HAP-1 (cell line): ENCODE measurements at regions of chr15 and their contacts with region 1.

Region 1: DNA sequence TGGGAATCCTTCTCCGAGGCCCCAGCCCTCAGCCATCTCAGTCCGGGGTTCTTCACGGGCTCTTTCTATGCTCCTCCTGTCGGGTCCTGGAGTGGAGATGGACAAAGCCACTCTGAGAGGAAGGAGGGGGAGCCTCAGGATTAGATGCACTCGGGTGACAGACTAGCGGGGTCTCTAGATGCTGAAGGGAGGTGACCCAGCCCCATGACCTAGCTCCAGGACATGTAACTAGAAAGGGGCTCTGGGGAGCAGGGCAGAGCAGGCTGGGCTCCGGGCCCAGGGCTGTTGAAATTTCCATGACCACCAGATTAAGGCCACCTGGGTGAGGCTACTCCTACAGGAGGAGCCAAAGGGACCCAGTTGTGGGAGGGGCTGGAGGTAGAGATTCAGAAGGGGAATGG is 14.8 kb upstream of the SKIC8 start:
- DNase-seq: no peak
- H3K4me3 ChIP-seq: no peak overlapping the region
- H3K4me1 ChIP-seq: no peaks in the 10 kb centered on the region
- H3K27me3 ChIP-seq: no peaks in the 10 kb centered on the region

Region 2: GRCh38 chr15:78415286-78415685 is 101.1 kb after region 1 on chr15:
- in situ Hi-C with region 1: loop called (anchors 5 kb)
- DNase-seq: peak in 1 of 2 experiments; percentile 38
- H3K4me3 ChIP-seq: no peak overlapping the region
- H3K4me1 ChIP-seq: peaks cover 7% of the 10 kb centered on the region; the same call in 1 of the 2 replicates
- H3K27me3 ChIP-seq: peaks cover 45% of the 10 kb centered on the region

Region 3: DNA sequence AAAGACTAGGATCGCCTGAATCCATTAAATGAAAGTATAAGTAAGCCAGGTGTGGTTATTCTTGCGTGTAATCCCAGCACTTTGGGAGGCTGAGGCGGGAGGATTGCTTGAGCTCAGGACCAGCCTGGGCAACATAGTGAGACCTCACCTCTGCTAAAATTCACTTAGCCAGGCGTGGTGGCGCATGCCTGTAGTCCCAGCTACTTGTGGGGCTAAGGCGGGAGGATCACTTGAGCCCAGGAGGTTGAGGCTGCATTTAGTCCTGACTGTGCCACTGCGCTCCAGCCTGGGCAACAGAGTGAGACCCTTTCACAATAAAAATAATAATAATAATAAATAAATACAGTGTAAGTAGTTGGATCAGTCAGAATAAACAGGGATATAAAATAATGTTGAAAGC is 167.7 kb after region 1 on chr15:
- in situ Hi-C with region 1: loop called (anchors 5 kb)
- DNase-seq: no peak
- H3K4me3 ChIP-seq: no peak overlapping the region
- H3K4me1 ChIP-seq: no peaks in the 10 kb centered on the region
- H3K27me3 ChIP-seq: no peaks in the 10 kb centered on the region